Naive thymus-derived CD4-positive, alpha-beta T cell (primary cell): ENCODE measurements at regions of chr12 and their contacts with region 1.

Region 1: GRCh38 chr12:116236148-116236731 is 41.3 kb downstream of the MED13L start:
- DNase-seq: peak in 8 of 9 donors; percentile 34 to 61 (median 46)
- ATAC-seq: peak; percentile 85
- H3K4me3 ChIP-seq: no peak overlapping the region
- H3K4me3 Mint-ChIP-seq: peak overlapping the region in 8 of 10 donors; percentile 16 to 71 (median 44)
- H3K27ac ChIP-seq: peak overlapping the region; percentile 37
- H3K27ac Mint-ChIP-seq: peak overlapping the region; percentile 38 to 89 (median 82)
- H3K4me1 ChIP-seq: peaks cover 0 to 18% of the 10 kb centered on the region in 2 donors
- H3K4me1 Mint-ChIP-seq: peaks cover 25 to 70% (median 57%) of the 10 kb centered on the region in 7 donors
- H3K27me3 ChIP-seq: no peaks in the 10 kb centered on the region
- H3K27me3 Mint-ChIP-seq: no peaks in the 10 kb centered on the region

Region 2: DNA sequence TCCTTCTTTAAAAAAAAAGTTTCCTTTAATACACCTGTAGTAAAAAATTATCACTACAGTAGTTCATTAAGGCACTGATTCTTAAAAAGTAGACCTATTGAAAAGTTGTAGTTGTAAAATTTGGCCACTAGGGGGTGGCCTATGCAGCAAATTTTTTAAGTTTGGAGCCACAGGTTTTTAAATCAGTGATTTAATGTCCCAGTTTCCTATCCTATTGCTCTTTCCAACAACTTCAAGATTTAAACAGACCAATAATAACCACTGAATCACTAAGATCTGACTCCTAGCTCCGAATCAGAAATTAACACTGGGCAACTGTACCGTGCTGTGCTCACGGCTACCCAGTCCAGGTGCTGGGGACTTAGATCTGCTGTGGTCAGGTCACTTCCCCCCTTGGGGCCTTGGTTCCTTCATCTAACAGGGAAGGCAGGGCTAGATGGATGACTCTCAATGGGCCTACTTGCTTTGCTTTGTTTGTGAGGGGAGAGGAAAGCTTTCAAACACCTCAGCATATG is 238.1 kb before region 1 on chr12:
- CTCF ChIA-PET with region 1: no interaction called
- POLR2A ChIA-PET with region 1: no interaction called
- intact Hi-C with region 1: loop called (anchors 1 kb)
- DNase-seq: peak in 7 of 9 donors; percentile 13 to 49 (median 31)
- ATAC-seq: peak; percentile 72
- H3K4me3 ChIP-seq: no peak overlapping the region
- H3K4me3 Mint-ChIP-seq: no peak overlapping the region
- H3K27ac ChIP-seq: no peak overlapping the region
- H3K27ac Mint-ChIP-seq: peak overlapping the region in 5 of 9 donors; percentile 31 to 69 (median 46)
- H3K4me1 ChIP-seq: no peaks in the 10 kb centered on the region
- H3K4me1 Mint-ChIP-seq: peaks cover 0 to 26% (median 10%) of the 10 kb centered on the region in 7 donors
- H3K27me3 ChIP-seq: no peaks in the 10 kb centered on the region
- H3K27me3 Mint-ChIP-seq: no peaks in the 10 kb centered on the region

Region 3: GRCh38 chr12:116015525-116015924 is 220.7 kb before region 1 on chr12:
- CTCF ChIA-PET with region 1: interaction called, 3 read pairs
- POLR2A ChIA-PET with region 1: no interaction called
- intact Hi-C with region 1: loop called (anchors 1 kb)
- DNase-seq: peak in 4 of 9 donors; percentile 5 to 19 (median 14)
- ATAC-seq: peak; percentile 57
- H3K4me3 ChIP-seq: no peak overlapping the region
- H3K4me3 Mint-ChIP-seq: no peak overlapping the region
- H3K27ac ChIP-seq: no peak overlapping the region
- H3K27ac Mint-ChIP-seq: peak overlapping the region in 5 of 9 donors; percentile 8 to 68 (median 45)
- H3K4me1 ChIP-seq: no peaks in the 10 kb centered on the region
- H3K4me1 Mint-ChIP-seq: peaks cover 0 to 5% (median 4%) of the 10 kb centered on the region in 7 donors
- H3K27me3 ChIP-seq: no peaks in the 10 kb centered on the region
- H3K27me3 Mint-ChIP-seq: no peaks in the 10 kb centered on the region

Region 4: DNA sequence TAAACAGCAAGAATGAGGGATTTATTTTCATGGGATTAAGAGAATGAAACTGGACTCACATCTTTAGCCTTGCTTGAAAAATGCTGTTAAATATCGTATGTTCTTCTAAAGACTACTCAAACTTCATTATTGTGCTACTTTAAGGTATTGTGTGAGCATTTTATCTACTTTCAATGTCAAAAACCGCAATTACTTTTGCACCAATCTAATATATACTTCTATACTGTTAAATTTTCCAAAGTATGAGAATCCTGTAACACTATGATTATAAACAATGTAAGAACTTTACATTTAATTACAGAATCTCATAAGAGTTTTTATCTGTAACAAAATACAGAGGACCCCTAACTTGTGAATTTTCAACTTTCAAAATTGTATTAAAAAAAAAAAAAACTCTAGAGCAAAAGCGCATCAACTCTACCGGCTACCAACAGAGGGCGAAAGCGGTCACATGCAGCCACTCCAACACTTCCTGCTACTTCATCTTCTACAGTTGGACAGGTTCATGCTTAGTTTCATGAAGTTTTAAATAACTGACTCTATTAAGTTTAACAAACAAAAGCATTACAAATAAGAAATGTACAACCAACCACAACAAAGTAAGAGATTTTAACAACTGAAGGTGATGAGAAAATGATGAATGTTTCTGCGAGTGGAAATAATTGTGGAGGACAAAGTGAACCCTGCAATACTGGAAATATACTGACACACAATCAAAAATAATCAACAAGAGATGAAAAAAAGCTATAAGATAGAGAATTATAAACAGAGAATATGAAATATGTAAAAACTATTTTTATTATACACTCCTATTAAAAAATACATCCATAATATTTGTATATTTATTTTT is 169.6 kb before region 1 on chr12:
- CTCF ChIA-PET with region 1: interaction called, 5 read pairs
- POLR2A ChIA-PET with region 1: no interaction called
- intact Hi-C with region 1: loop called (anchors 1 kb)
- DNase-seq: peak; percentile 18 to 58 (median 49)
- ATAC-seq: peak; percentile 87
- H3K4me3 ChIP-seq: no peak overlapping the region
- H3K4me3 Mint-ChIP-seq: peak overlapping the region in 1 of 10 donors; percentile 14
- H3K27ac ChIP-seq: no peak overlapping the region
- H3K27ac Mint-ChIP-seq: peak overlapping the region in 4 of 9 donors; percentile 3 to 80 (median 10)
- H3K4me1 ChIP-seq: no peaks in the 10 kb centered on the region
- H3K4me1 Mint-ChIP-seq: peaks cover 22 to 72% (median 55%) of the 10 kb centered on the region in 7 donors
- H3K27me3 ChIP-seq: no peaks in the 10 kb centered on the region
- H3K27me3 Mint-ChIP-seq: no peaks in the 10 kb centered on the region

Region 5: GRCh38 chr12:116135209-116135930 is 100.9 kb before region 1 on chr12:
- CTCF ChIA-PET with region 1: no interaction called
- POLR2A ChIA-PET with region 1: no interaction called
- intact Hi-C with region 1: loop called in 1 of 2 experiments (anchors 5 kb)
- DNase-seq: no peak
- ATAC-seq: no peak
- H3K4me3 ChIP-seq: no peak overlapping the region
- H3K4me3 Mint-ChIP-seq: peak overlapping the region in 2 of 10 donors; percentile 16 to 55
- H3K27ac ChIP-seq: no peak overlapping the region
- H3K27ac Mint-ChIP-seq: peak overlapping the region in 3 of 9 donors; percentile 15 to 91 (median 50)
- H3K4me1 ChIP-seq: peaks cover 4 to 36% of the 10 kb centered on the region in 2 donors
- H3K4me1 Mint-ChIP-seq: peaks cover 56 to 88% (median 79%) of the 10 kb centered on the region in 7 donors
- H3K27me3 ChIP-seq: no peaks in the 10 kb centered on the region
- H3K27me3 Mint-ChIP-seq: no peaks in the 10 kb centered on the region

Region 6: GRCh38 chr12:116142936-116143898 is 93.0 kb before region 1 on chr12:
- CTCF ChIA-PET with region 1: interaction called, 7 read pairs
- POLR2A ChIA-PET with region 1: no interaction called
- intact Hi-C with region 1: loop called (anchors 1 to 5 kb)
- DNase-seq: no peak
- ATAC-seq: peak; percentile 63
- H3K4me3 ChIP-seq: no peak overlapping the region
- H3K4me3 Mint-ChIP-seq: peak overlapping the region in 7 of 10 donors; percentile 15 to 72 (median 51)
- H3K27ac ChIP-seq: no peak overlapping the region
- H3K27ac Mint-ChIP-seq: peak overlapping the region in 5 of 9 donors; percentile 1 to 45 (median 7)
- H3K4me1 ChIP-seq: peaks cover 11 to 21% of the 10 kb centered on the region in 2 donors
- H3K4me1 Mint-ChIP-seq: peaks cover 42 to 61% (median 52%) of the 10 kb centered on the region in 7 donors
- H3K27me3 ChIP-seq: no peaks in the 10 kb centered on the region
- H3K27me3 Mint-ChIP-seq: no peaks in the 10 kb centered on the region